IMR-90 (cell line): ENCODE measurements at regions of chr1 and their contacts with region 1.

Region 1: GRCh38 chr1:219660666-219661463 is 48.0 kb upstream of the ZC3H11B start:
- DNase-seq: peak; percentile 88
- ATAC-seq: peak; percentile 92
- H3K4me3 ChIP-seq: no peak overlapping the region
- H3K27ac ChIP-seq: peak overlapping the region; percentile 60; the same call in 1 of the 2 replicates
- H3K4me1 ChIP-seq: peaks cover 6% of the 10 kb centered on the region; the same call in 1 of the 2 replicates
- H3K27me3 ChIP-seq: no peaks in the 10 kb centered on the region
- CTCF ChIP-seq: peak; percentile 89
- POLR2A ChIP-seq: 0 out of 2 replicates have a peak, but pooled peaks have one; percentile 27
- RAD21 ChIP-seq: peak; percentile 81

Region 2: GRCh38 chr1:218323568-218324225 is 1337.2 kb before region 1 on chr1:
- CTCF ChIA-PET with region 1: interaction called, 4 read pairs
- POLR2A ChIA-PET with region 1: no interaction called
- dilution Hi-C with region 1: no loop called
- in situ Hi-C with region 1: loop called (anchors 10 kb)
- intact Hi-C with region 1: no loop called
- DNase-seq: no peak
- ATAC-seq: no peak
- H3K4me3 ChIP-seq: no peak overlapping the region
- H3K27ac ChIP-seq: no peak overlapping the region
- H3K4me1 ChIP-seq: peaks cover 2% of the 10 kb centered on the region; the same call in 1 of the 2 replicates
- H3K27me3 ChIP-seq: no peaks in the 10 kb centered on the region
- CTCF ChIP-seq: no peak
- POLR2A ChIP-seq: no peak
- RAD21 ChIP-seq: no peak

Region 3: DNA sequence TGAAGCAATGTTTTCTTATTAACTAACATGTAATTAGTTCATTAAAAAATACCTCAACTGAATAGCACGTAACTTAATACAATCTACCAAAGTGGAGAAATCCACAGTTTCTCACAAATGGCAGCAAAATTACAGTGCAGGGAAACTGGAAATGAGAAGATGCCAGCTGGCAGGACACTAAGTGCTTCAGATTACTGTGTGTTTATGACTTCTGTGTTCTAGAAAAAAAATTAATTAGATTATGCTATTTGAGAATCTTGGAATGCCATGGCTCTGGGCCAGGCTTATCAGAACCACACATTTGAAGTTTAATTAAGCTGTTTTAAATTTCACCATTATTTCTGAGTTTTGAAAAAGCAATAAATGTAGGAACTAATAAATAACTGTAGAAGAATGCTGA is 958.1 kb before region 1 on chr1:
- CTCF ChIA-PET with region 1: no interaction called
- POLR2A ChIA-PET with region 1: no interaction called
- dilution Hi-C with region 1: no loop called
- in situ Hi-C with region 1: no loop called
- intact Hi-C with region 1: no loop called
- DNase-seq: no peak
- ATAC-seq: no peak
- H3K4me3 ChIP-seq: no peak overlapping the region
- H3K27ac ChIP-seq: no peak overlapping the region
- H3K4me1 ChIP-seq: peaks cover 10% of the 10 kb centered on the region; the same call in 1 of the 2 replicates
- H3K27me3 ChIP-seq: no peaks in the 10 kb centered on the region
- CTCF ChIP-seq: no peak
- POLR2A ChIP-seq: no peak
- RAD21 ChIP-seq: no peak

Region 4: DNA sequence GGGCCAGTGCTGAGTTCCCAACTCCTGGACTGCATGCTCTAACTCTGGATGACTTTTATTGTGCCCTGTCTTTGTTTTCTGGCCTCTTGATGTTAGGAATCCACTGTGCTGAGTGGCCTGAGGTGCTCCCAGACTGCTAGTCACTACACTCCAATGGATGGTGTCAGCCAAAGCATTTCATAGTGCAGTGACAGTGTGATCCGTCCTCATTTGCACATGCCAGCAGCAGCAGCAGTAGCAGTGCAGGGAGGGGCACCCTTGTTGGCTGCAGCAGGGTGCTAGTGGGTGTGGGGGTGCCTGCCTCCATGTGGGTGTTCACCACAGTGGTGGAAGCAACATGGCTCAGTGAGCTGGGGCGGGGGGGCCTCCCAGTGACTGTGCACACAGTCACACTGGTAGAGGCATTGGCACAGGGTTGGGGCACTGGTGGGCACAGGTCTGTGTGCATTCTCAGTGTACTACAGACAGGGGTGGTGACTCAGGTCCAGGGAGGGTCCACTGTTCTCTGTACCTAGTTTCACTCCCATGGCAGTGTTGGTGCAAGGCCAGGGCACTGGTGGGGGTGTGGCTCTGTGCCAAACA is 262.0 kb before region 1 on chr1:
- CTCF ChIA-PET with region 1: no interaction called
- POLR2A ChIA-PET with region 1: no interaction called
- dilution Hi-C with region 1: no loop called
- in situ Hi-C with region 1: no loop called
- intact Hi-C with region 1: loop called (anchors 5 kb)
- DNase-seq: no peak
- ATAC-seq: no peak
- H3K4me3 ChIP-seq: no peak overlapping the region
- H3K27ac ChIP-seq: no peak overlapping the region
- H3K4me1 ChIP-seq: no peaks in the 10 kb centered on the region
- H3K27me3 ChIP-seq: no peaks in the 10 kb centered on the region
- CTCF ChIP-seq: no peak
- POLR2A ChIP-seq: no peak
- RAD21 ChIP-seq: no peak

Region 5: GRCh38 chr1:219917851-219918466 is 257.1 kb after region 1 on chr1:
- CTCF ChIA-PET with region 1: no interaction called
- POLR2A ChIA-PET with region 1: no interaction called
- dilution Hi-C with region 1: no loop called
- in situ Hi-C with region 1: no loop called
- intact Hi-C with region 1: no loop called
- DNase-seq: no peak
- ATAC-seq: no peak
- H3K4me3 ChIP-seq: no peak overlapping the region
- H3K27ac ChIP-seq: no peak overlapping the region
- H3K4me1 ChIP-seq: no peaks in the 10 kb centered on the region
- H3K27me3 ChIP-seq: no peaks in the 10 kb centered on the region
- CTCF ChIP-seq: no peak
- POLR2A ChIP-seq: no peak
- RAD21 ChIP-seq: no peak